Calu3 (cell line): ENCODE measurements at regions of chr4 and their contacts with region 1.

Region 1: DNA sequence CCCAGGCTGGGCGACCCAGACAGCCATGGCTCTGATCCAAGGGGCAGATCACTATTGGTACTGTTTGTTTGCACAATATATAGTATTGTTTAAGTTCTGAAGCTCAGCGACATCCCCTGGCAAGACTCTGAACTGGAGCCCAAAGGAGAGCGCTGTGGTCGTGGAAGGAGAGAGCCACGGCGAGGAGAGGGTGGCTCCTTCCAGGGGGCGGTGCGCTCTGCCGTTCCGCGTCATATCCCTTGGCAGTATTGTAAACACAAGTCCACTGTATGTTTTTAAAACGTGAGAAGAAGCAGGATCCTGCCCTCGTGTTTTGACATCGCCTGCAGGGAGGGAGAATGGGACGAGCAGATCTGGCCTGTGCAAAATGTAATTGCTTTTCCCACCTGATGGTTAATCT is 185.5 kb downstream of the RAB28 start:
- DNase-seq: no peak
- H3K4me3 Mint-ChIP-seq: no peak overlapping the region
- H3K27ac Mint-ChIP-seq: no peak overlapping the region
- H3K4me1 Mint-ChIP-seq: no peaks in the 10 kb centered on the region
- H3K27me3 Mint-ChIP-seq: no peaks in the 10 kb centered on the region
- CTCF ChIP-seq: no peak

Region 2: DNA sequence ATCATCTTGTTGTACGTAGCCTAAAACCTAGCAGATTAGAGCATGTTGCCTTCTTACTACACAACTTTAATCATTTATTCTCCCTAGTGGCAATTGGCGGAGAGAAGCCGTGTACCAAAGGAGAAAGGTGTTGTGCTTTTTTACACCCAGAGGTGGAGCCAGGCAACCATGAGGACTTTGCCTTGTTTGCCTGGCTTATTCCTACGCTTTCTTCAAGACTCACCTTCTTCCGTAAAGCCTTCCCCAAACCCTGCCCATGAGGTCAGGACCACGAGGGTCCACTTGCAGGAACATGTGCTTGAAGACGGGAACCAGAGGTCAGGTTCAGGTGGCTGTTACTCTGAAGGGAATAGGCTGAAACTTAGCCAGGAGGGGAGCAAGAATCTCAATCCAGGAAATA is 105.0 kb before region 1 on chr4:
- CTCF ChIA-PET with region 1: no interaction called
- intact Hi-C with region 1: no loop called
- DNase-seq: no peak
- H3K4me3 Mint-ChIP-seq: no peak overlapping the region
- H3K27ac Mint-ChIP-seq: no peak overlapping the region
- H3K4me1 Mint-ChIP-seq: no peaks in the 10 kb centered on the region
- H3K27me3 Mint-ChIP-seq: no peaks in the 10 kb centered on the region
- CTCF ChIP-seq: no peak

Region 3: GRCh38 chr4:14871676-14872430 is 1573.2 kb after region 1 on chr4:
- CTCF ChIA-PET with region 1: no interaction called
- intact Hi-C with region 1: loop called (anchors 10 kb)
- DNase-seq: peak; percentile 52
- H3K4me3 Mint-ChIP-seq: no peak overlapping the region
- H3K27ac Mint-ChIP-seq: no peak overlapping the region
- H3K4me1 Mint-ChIP-seq: no peaks in the 10 kb centered on the region
- H3K27me3 Mint-ChIP-seq: no peaks in the 10 kb centered on the region
- CTCF ChIP-seq: peak; percentile 50